Psoas muscle (tissue), 8 donors: ENCODE measurements at regions of chr16 and their contacts with region 1.

Region 1: DNA sequence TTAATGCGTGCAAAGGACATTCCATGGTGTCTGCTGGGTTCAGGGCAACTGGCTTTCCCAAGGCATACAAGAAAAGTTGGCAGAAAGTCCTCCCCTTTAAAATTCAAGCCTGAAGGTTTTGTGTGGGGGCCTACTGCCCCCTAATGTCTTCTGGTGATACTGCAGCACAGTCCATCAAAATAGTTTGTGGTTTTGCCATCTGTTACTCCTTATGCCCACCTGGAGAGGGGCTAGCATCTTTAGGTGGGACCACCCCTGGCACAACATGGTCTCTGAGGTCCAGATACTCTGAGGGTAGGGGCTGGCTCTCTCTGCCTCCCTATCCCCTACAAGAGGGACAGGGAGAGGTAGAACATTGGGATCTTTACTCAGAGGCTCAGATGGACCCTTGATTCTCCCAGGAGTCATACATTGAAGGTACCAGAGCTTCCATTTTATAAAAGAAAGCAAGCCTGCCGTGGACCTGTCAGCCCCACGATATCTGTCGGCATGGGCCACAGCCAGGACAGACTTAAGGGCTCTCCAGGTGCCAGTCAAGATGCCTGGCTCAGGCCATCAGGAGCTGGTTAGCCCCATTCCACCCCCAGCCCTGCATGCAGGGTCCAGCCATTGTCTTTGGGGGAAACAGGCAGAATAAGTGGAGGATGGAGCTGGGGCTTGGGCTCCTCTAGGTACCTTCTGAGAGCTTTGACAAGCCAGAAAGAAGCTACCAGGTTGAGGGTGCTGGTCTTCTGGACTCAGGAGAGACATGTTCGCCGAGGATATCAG is 6.3 kb downstream of the ESRP2 start:
- DNase-seq: no peak
- ATAC-seq: peak; percentile 51 to 78 (median 66)
- H3K4me3 ChIP-seq: no peak overlapping the region
- H3K27ac ChIP-seq: peak overlapping the region; percentile 80
- H3K4me1 ChIP-seq: peaks cover 32% of the 10 kb centered on the region
- H3K27me3 ChIP-seq: no peaks in the 10 kb centered on the region
- CTCF ChIP-seq: peak; percentile 92

Region 2: GRCh38 chr16:67897231-67897630 is 332.4 kb before region 1 on chr16:
- intact Hi-C with region 1: no loop called
- DNase-seq: no peak
- ATAC-seq: no peak
- H3K4me3 ChIP-seq: no peak overlapping the region
- H3K27ac ChIP-seq: peak overlapping the region; percentile 62
- H3K4me1 ChIP-seq: peaks cover 64% of the 10 kb centered on the region
- H3K27me3 ChIP-seq: peaks cover 0 to 1% (median 0%) of the 10 kb centered on the region in 3 donors
- CTCF ChIP-seq: no peak

Region 3: GRCh38 chr16:67993189-67994039 is 236.2 kb before region 1 on chr16:
- intact Hi-C with region 1: loop called in 1 of 2 experiments (anchors 5 kb)
- DNase-seq: peak; percentile 85 to 93
- ATAC-seq: peak; percentile 74 to 85 (median 80)
- H3K4me3 ChIP-seq: peak overlapping the region; percentile 64
- H3K27ac ChIP-seq: peak overlapping the region; percentile 81
- H3K4me1 ChIP-seq: peaks cover 46% of the 10 kb centered on the region
- H3K27me3 ChIP-seq: no peaks in the 10 kb centered on the region
- CTCF ChIP-seq: peak; percentile 100

Region 4: GRCh38 chr16:68074850-68075555 is 154.6 kb before region 1 on chr16:
- intact Hi-C with region 1: loop called in 1 of 2 experiments (anchors 5 kb)
- DNase-seq: no peak
- ATAC-seq: no peak
- H3K4me3 ChIP-seq: no peak overlapping the region
- H3K27ac ChIP-seq: peak overlapping the region; percentile 61
- H3K4me1 ChIP-seq: peaks cover 52% of the 10 kb centered on the region
- H3K27me3 ChIP-seq: no peaks in the 10 kb centered on the region
- CTCF ChIP-seq: no peak

Region 5: DNA sequence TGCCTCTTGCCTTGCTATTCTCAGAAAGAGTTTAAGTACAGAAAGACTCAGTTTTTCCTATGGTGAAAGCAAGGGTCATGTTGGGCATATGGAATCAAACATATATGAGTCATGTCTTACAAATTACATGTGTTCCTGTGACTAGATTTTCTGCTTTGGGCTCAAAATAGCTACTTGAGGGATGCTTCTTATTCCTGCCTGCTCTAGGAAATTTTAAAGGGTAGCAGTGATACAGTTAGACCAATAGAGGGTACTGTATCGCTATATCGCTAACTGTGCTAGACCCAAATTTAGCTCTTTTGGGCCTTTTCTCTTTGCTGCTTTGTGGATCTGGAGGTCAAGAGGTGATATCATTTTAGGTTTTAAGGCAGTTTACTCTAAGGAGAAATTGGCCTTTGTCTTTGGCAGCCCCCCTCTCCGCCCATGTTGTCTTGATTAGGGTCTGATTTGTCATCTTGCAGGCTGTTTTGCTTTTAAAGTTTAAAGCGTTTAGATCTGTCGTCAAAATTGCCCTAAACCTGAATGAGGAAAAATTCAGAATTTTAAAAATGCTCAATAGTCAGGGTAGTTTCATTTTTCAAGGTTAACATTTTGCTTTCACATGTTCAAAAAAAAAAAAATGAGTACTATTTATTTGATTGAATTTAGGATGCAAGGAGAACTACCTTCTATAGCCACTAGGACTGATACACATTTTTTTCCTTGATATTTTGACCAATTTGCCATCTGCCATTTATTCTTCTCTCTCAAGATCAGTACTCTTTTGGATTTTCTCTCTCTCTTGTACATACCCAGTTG is 135.6 kb before region 1 on chr16:
- intact Hi-C with region 1: loop called (anchors 5 kb)
- DNase-seq: no peak
- ATAC-seq: peak in 3 of 4 donors; percentile 51 to 69 (median 56)
- H3K4me3 ChIP-seq: peak overlapping the region; percentile 41
- H3K27ac ChIP-seq: peak overlapping the region; percentile 90
- H3K4me1 ChIP-seq: peaks cover 84% of the 10 kb centered on the region
- H3K27me3 ChIP-seq: no peaks in the 10 kb centered on the region
- CTCF ChIP-seq: peak; percentile 37